HEK293 (cell line): ENCODE measurements at regions of chr2 and their contacts with region 1.

Region 1: DNA sequence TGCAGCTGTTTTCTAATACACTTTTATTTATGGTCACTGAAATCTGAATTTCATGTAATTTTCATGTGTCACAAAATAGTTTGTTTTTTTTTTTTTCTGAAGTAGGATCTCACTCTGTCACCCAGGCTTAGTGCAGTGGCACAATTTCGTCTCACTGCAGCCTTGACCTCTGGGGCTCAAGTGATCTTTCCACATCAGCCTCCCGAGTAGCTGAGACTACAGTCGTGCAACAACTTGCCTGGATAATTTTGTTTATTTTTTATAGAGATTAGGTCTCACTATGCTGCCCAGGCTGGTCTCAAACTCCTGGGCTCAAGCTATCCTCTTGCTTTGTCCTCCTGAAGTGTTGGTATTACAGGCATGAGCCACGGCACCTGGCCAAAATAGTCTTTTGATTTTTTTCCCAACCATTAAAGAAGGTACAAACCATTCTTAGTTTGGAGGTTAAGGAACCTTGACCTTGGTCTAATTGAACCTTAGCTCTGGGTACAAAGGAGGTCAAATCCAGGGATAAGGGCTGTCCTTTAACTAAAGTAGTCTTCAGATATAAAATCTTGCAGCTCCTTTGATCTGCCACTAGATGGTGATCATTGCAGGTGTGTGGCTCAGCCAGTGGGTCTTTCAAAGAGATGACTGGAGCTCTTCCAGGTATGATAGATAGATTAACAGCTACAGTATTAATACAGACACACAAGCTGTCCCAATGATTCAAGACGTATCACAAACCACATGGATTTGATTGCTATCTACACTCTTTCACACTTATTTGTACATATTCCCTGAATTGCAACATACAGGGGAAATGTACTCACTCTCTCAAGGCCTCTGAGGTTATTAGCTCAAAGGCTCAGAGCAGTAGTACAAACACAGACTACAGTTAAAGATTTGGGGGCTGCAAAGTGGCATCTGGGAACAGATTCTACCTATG is 4.7 kb upstream of the KRCC1 start:
- H3K4me3 ChIP-seq: no peak overlapping the region
- H3K27ac ChIP-seq: no peak overlapping the region
- H3K4me1 ChIP-seq: no peaks in the 10 kb centered on the region; the same call in 1 of the 2 replicates
- CTCF ChIP-seq: 0 out of 2 replicates have a peak, but pooled peaks have one; percentile 34

Region 2: GRCh38 chr2:88085099-88085498 is 24.9 kb after region 1 on chr2:
- CTCF ChIA-PET with region 1: interaction called, 17 read pairs
- POLR2A ChIA-PET with region 1: no interaction called
- H3K4me3 ChIP-seq: no peak overlapping the region
- H3K27ac ChIP-seq: no peak overlapping the region
- H3K4me1 ChIP-seq: no peaks in the 10 kb centered on the region
- CTCF ChIP-seq: no peak

Region 3: DNA sequence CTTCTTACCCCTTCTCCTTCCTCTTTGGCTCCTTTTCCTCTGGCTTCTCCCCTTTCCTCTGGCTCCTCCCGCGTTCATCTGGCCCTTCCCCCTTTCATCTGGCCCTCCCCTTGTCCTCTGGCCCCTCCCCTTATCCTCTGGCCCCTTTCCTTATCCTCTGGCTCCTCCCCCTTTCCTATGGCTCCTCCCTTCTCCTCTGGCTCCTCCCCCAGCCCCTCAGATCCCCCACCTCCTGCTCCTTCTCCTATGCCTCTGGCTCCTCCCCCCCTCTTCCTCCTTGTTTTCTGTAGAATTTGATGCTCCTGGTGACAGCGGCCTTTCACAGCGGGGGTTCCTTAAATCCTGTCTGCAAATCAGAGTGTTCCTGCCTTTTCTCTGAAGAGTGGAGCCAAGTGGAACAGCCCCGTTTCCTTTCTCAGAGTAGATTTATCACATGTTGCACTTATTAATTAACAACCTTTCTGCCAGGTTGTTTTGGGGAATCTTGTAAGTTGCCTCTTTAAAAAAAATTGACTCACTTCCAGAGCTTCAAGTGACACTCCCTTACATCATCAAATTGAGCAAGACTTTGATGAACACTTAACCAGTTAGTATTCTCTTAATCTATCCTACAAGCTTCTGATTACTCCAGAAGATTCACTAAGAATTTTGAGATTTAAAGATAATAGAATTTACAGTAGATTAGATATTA is 39.7 kb after region 1 on chr2:
- CTCF ChIA-PET with region 1: interaction called, 11 read pairs
- POLR2A ChIA-PET with region 1: no interaction called
- H3K4me3 ChIP-seq: no peak overlapping the region
- H3K27ac ChIP-seq: no peak overlapping the region
- H3K4me1 ChIP-seq: no peaks in the 10 kb centered on the region
- CTCF ChIP-seq: no peak

Region 4: GRCh38 chr2:88159955-88160415 is 99.7 kb after region 1 on chr2:
- CTCF ChIA-PET with region 1: interaction called, 141 read pairs
- POLR2A ChIA-PET with region 1: interaction called, 3 read pairs
- H3K4me3 ChIP-seq: no peak overlapping the region
- H3K27ac ChIP-seq: no peak overlapping the region
- H3K4me1 ChIP-seq: no peaks in the 10 kb centered on the region
- CTCF ChIP-seq: peak; percentile 52; the same call in 1 of the 2 replicates

Region 5: DNA sequence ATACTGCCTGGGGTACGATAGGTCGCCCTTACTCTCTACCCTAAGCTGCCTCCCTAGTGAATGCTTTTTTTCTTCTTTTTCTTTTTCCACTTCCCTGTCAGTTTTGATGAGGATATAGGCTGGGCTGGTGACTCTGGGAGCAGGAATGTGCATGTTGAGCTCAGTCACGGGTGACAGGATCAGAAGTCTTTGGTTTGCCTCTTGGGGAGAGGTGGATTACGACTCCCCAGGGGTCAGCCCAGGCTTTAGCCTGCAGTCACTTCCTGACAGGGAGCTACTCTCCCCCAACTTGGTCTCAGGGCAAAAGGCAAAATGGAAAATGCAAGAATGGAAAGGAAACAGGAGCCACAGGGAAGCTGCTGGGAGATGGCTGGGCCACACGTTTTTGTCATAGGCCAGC is 167.2 kb after region 1 on chr2:
- CTCF ChIA-PET with region 1: no interaction called
- POLR2A ChIA-PET with region 1: no interaction called
- H3K4me3 ChIP-seq: no peak overlapping the region
- H3K27ac ChIP-seq: no peak overlapping the region
- H3K4me1 ChIP-seq: no peaks in the 10 kb centered on the region
- CTCF ChIP-seq: no peak

Region 6: GRCh38 chr2:88451811-88452565 is 391.7 kb after region 1 on chr2:
- CTCF ChIA-PET with region 1: interaction called, 32 read pairs
- POLR2A ChIA-PET with region 1: no interaction called
- H3K4me3 ChIP-seq: peak overlapping the region; percentile 76
- H3K27ac ChIP-seq: peak overlapping the region; percentile 52; the same call in 1 of the 2 replicates
- H3K4me1 ChIP-seq: 0 out of 2 replicates have a peak, but pooled peaks cover 2% of the 10 kb centered on the region
- CTCF ChIP-seq: no peak